SK-N-SH (cell line): ENCODE measurements at regions of chr16 and their contacts with region 1.

Region 1: DNA sequence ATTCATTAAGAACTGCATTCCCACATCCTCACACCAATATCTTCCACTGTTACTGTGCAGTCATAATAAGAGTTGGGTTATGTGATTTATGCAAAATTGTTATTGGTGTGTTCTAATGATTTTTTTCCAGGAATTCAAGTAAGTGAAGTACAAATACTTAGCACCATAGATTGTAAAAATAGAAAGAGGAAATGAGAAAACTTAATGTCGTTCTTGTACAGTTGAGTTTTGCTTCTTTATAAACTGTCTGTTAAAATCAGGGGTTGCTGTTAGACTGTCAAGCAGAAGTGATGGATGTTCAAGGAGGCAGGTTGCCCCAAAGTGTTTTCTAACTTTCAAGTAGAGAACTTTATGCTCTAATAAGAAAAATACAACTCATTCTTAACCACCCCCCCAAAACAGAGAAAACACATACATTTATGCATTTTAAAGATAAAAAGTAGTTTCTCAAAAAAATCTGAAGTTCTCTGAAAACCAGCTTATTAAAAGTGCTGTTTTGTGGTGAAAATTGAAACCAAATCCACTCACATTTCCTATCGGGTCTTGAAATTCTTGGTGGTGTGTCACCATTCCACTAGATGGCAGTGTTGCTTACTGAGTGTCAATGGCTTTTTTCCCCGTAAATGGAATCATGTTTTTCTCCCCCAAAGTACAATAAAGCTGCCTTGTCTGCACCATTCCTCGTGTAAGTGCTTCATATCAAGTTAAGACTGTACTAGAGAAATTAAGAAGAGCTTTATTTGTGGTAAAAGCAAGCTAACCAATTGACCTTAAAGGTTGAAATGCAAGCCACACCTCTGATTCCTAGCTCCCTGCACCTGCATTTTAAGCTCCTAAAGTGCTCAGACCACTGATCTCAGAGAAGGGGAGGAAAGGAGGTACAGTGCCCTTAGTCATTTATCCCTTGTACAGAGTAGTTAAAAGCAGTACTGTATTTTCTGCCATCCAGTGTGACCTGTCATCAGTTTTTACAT is 4.7 kb upstream of the IGSF6 start:
- DNase-seq: peak; percentile 72
- H3K4me3 ChIP-seq: no peak overlapping the region
- H3K27ac ChIP-seq: no peak overlapping the region
- H3K4me1 ChIP-seq: peaks cover 0 to 3% of the 10 kb centered on the region in 2 experiments; a peak in 1 of 4 replicates
- H3K27me3 ChIP-seq: no peaks in the 10 kb centered on the region
- CTCF ChIP-seq: peak; percentile 90
- EP300 ChIP-seq: no peak
- RAD21 ChIP-seq: peak; percentile 76

Region 2: DNA sequence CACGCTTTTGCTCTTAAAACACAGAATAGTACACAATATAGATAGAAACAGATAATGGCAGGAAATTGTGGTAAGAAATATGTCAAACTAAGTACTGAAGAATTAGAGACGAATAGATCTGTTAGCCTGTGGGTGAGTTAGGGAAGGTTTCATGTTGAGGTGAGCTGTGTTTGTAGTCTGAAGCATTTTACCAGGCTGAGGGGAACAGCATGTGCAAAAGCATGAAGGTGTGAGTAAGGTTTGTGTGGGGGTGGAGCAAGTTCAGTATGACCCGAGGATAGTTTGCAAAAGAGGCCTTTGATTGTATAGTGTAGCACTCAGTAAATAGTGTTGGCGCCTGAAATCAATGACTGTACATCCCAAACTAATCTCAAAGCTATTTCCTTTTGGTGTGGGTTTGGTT is 18.5 kb before region 1 on chr16:
- CTCF ChIA-PET with region 1: interaction called, 41 read pairs
- POLR2A ChIA-PET with region 1: no interaction called
- DNase-seq: no peak
- H3K4me3 ChIP-seq: peak overlapping the region in 1 of 2 experiments; percentile 4; a peak in 1 of 4 replicates
- H3K27ac ChIP-seq: peak overlapping the region; percentile 4 to 57; a peak in 3 of 4 replicates
- H3K4me1 ChIP-seq: peaks cover 0 to 17% of the 10 kb centered on the region in 2 experiments; a peak in 2 of 4 replicates
- H3K27me3 ChIP-seq: no peaks in the 10 kb centered on the region
- CTCF ChIP-seq: no peak
- EP300 ChIP-seq: no peak
- RAD21 ChIP-seq: no peak

Region 3: DNA sequence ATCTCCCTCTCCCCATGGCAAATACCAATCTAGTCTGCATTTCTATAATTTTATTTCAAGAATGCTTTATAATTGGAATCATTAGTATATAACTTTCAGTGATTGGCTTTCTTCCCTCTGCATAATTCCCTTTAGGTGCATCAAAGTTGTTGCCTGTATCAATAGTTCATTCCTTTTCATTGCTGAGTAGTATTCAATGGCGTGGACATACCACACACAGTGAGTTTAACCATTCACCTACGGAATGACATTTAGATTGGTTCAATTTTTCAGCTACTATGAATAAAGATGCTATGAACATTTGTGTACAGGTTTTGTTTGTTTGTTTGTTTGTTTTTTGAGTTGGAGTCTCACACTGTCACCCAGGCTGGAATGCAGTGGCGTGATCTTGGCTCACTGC is 16.4 kb after region 1 on chr16:
- CTCF ChIA-PET with region 1: interaction called, 28 read pairs
- POLR2A ChIA-PET with region 1: no interaction called
- DNase-seq: no peak
- H3K4me3 ChIP-seq: no peak overlapping the region
- H3K27ac ChIP-seq: no peak overlapping the region
- H3K4me1 ChIP-seq: no peaks in the 10 kb centered on the region
- H3K27me3 ChIP-seq: 0 out of 2 replicates have a peak, but pooled peaks cover 12% of the 10 kb centered on the region
- CTCF ChIP-seq: no peak
- EP300 ChIP-seq: no peak
- RAD21 ChIP-seq: no peak

Region 4: GRCh38 chr16:21698169-21699032 is 41.3 kb after region 1 on chr16:
- CTCF ChIA-PET with region 1: interaction called, 28 read pairs
- POLR2A ChIA-PET with region 1: no interaction called
- DNase-seq: no peak
- H3K4me3 ChIP-seq: no peak overlapping the region
- H3K27ac ChIP-seq: no peak overlapping the region
- H3K4me1 ChIP-seq: no peaks in the 10 kb centered on the region
- H3K27me3 ChIP-seq: no peaks in the 10 kb centered on the region; the same call in 1 of the 2 replicates
- CTCF ChIP-seq: peak; percentile 10; the same call in 1 of the 2 replicates
- EP300 ChIP-seq: no peak
- RAD21 ChIP-seq: no peak

Region 5: GRCh38 chr16:22141746-22142145 is 484.7 kb after region 1 on chr16:
- CTCF ChIA-PET with region 1: no interaction called
- POLR2A ChIA-PET with region 1: no interaction called
- DNase-seq: peak; percentile 42
- H3K4me3 ChIP-seq: no peak overlapping the region
- H3K27ac ChIP-seq: no peak overlapping the region
- H3K4me1 ChIP-seq: no peaks in the 10 kb centered on the region
- H3K27me3 ChIP-seq: peaks cover 28% of the 10 kb centered on the region
- CTCF ChIP-seq: peak; percentile 52
- EP300 ChIP-seq: no peak
- RAD21 ChIP-seq: no peak

Region 6: GRCh38 chr16:22374311-22375116 is 717.4 kb after region 1 on chr16 and contains the start of gene CDR2:
- CTCF ChIA-PET with region 1: no interaction called
- POLR2A ChIA-PET with region 1: no interaction called
- DNase-seq: peak; percentile 99
- H3K4me3 ChIP-seq: peak within 1 kb of the TSS; percentile 79 to 85
- H3K27ac ChIP-seq: peak within 1 kb of the TSS; percentile 62 to 73; a peak in 3 of 4 replicates
- H3K4me1 ChIP-seq: peaks cover 9 to 32% of the 10 kb centered on the region in 2 experiments
- H3K27me3 ChIP-seq: no peaks in the 10 kb centered on the region
- CTCF ChIP-seq: no peak
- EP300 ChIP-seq: 0 out of 4 replicates have a peak, but pooled peaks of 1 of the 2 experiments have one; percentile 6
- RAD21 ChIP-seq: no peak
- polyA plus RNA-seq, gene CDR2: 30.3 and 38.1 TPM in 2 replicates